ENCODE measurements at regions of chr3 and their contacts with region 1.

Region 1: DNA sequence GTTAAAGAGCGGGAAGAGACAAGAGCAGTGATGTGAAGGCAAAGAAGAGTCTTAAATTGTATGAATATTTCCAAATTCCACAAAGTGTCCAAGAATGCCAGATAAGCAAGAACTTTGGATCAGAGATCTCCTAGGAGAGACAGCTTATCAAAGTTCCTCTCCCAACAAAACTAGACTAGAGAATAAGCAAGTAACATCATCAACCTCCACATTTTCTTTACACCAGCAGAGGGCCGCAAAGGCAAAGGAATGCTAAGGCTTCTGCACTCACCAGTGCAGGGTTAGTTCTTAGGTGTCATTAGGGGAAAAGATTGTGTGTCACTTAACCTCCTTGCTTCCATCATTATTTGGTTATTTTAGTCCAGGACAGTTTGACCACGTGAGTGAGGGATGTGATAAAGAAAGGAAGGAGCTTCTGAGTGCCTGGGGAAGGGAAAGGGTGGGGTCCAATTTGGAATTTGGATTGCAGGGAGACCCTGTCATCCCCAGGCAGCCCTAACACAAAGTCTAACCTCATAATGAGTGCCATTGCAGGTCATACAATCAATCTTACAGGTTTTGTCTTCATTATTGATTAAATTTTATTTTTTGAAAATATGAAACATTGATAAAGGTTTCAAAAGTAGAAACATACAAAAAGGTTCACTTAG is 7.5 kb upstream of the CMTM6 start:
- DNase-seq: peak in 1 of 2 donors; percentile 78
- ATAC-seq: peak; percentile 84 to 96 (median 94)
- H3K4me3 ChIP-seq: no peak overlapping the region
- H3K27ac ChIP-seq: no peak overlapping the region
- H3K4me1 ChIP-seq: peaks cover 0 to 7% (median 0%) of the 10 kb centered on the region in 9 donors
- H3K27me3 ChIP-seq: no peaks in the 10 kb centered on the region
- CTCF ChIP-seq: peak; percentile 49 to 88 (median 77)

Region 2: GRCh38 chr3:32480604-32481003 is 29.6 kb before region 1 on chr3:
- intact Hi-C with region 1: no loop called
- DNase-seq: no peak
- ATAC-seq: no peak
- H3K4me3 ChIP-seq: no peak overlapping the region
- H3K27ac ChIP-seq: no peak overlapping the region
- H3K4me1 ChIP-seq: peaks cover 0 to 34% (median 0%) of the 10 kb centered on the region in 9 donors
- H3K27me3 ChIP-seq: no peaks in the 10 kb centered on the region
- CTCF ChIP-seq: no peak

Region 3: DNA sequence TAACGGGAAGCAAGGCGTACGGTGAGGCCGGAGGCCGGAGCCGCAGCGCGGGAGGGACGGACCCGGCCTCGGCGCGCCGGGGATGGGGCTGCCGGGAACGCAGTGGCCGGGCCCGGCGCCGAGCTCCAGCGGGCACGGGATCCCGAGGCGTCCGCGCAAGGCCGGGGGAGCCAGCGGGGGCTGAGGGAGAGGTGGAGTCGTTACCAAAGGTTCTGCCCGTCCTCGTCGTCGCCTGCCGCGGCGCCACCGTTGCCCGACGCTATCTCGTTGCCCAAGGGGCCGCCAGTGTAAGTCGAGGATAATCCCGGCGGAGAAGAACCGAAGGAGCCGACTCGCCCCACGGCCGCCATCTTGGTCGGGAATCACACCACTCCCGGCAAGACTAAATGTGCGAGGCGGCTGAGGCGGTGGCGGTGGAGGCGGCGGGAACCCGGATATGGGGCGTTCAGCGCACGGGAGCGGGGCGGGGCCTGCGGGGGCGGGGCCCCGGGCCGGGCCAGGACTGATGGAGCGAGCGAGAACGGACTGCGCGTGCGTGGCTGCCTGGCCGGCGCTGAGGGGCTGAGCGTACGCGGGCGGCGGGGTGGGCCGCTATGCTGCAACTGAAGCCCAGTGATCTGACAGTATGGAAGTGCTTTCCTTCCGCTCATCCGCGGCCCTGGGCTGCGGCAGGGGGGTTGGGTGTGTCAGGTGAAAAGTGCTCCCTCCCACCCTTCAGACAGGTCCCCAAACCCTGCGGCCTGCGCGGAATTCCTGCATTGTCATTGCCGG is 60.4 kb after region 1 on chr3 and contains the start of gene DYNC1LI1:
- intact Hi-C with region 1: loop called in 5 of 10 experiments (anchors 5 to 10 kb)
- DNase-seq: peak; percentile 95 to 98
- ATAC-seq: peak; percentile 98 to 99 (median 98)
- H3K4me3 ChIP-seq: peak within 1 kb of the TSS; percentile 77 to 98 (median 94)
- H3K27ac ChIP-seq: peak within 1 kb of the TSS; percentile 97 to 100 (median 99)
- H3K4me1 ChIP-seq: peaks cover 0 to 62% (median 34%) of the 10 kb centered on the region in 9 donors
- H3K27me3 ChIP-seq: no peaks in the 10 kb centered on the region
- CTCF ChIP-seq: no peak
- total RNA-seq, gene DYNC1LI1: 42.6 to 69.9 (median 54.0) TPM

Region 4: GRCh38 chr3:32667122-32667521 is 156.9 kb after region 1 on chr3:
- intact Hi-C with region 1: loop called (anchors 1 to 5 kb)
- DNase-seq: no peak
- ATAC-seq: no peak
- H3K4me3 ChIP-seq: no peak overlapping the region
- H3K27ac ChIP-seq: no peak overlapping the region
- H3K4me1 ChIP-seq: no peaks in the 10 kb centered on the region
- H3K27me3 ChIP-seq: peaks cover 0 to 6% (median 0%) of the 10 kb centered on the region in 7 donors
- CTCF ChIP-seq: no peak

Region 5: GRCh38 chr3:32781210-32781968 is 271.2 kb after region 1 on chr3:
- intact Hi-C with region 1: loop called in 1 of 10 experiments (anchors 10 kb)
- DNase-seq: peak; percentile 58 to 78
- ATAC-seq: peak; percentile 91 to 96 (median 94)
- H3K4me3 ChIP-seq: peak overlapping the region; percentile 40 to 67 (median 58)
- H3K27ac ChIP-seq: no peak overlapping the region
- H3K4me1 ChIP-seq: peaks cover 0 to 9% (median 6%) of the 10 kb centered on the region in 9 donors
- H3K27me3 ChIP-seq: no peaks in the 10 kb centered on the region
- CTCF ChIP-seq: peak; percentile 61 to 93 (median 85)

Region 6: GRCh38 chr3:32934150-32934742 is 424.0 kb after region 1 on chr3:
- intact Hi-C with region 1: loop called in 1 of 10 experiments (anchors 10 kb)
- DNase-seq: no peak
- ATAC-seq: no peak
- H3K4me3 ChIP-seq: no peak overlapping the region
- H3K27ac ChIP-seq: no peak overlapping the region
- H3K4me1 ChIP-seq: no peaks in the 10 kb centered on the region
- H3K27me3 ChIP-seq: no peaks in the 10 kb centered on the region
- CTCF ChIP-seq: peak; percentile 19 to 72 (median 60)

Measured in heart right ventricle (tissue), 16 donors.